ENCODE measurements at regions of chr17 and their contacts with region 1.

Region 1: DNA sequence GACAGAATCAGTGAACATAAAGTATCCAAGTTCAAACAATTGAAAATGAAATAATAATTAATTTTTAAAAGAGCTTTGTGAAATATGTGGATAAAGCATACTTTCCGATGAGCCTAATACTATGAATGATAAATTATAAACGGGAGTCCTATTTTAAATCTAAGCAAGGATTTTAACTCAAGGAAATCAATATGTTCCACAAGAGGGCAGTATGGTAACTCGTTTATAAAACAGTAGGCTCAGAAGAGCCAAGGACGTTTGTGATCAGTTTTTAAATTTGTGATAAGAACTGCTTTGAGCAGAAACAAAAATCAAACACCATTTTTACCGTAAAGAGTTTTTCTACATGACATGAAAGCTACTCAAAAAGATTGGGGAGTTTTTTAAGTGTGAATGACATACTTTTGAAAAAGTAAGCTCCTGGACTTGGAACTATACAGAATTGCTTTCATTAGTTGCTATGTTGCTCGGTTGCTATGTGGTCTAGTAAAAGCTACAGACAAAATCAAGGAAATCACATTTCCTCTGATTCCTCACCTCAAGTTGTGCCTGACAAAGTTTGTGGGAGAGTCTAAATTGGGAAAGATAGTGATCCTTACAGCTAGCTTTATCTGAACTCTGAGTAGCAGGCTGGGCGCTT is 11.8 kb upstream of the TEKT1 start:
- DNase-seq: peak; percentile 65
- H3K4me3 Mint-ChIP-seq: no peak overlapping the region
- H3K27ac Mint-ChIP-seq: no peak overlapping the region
- H3K4me1 Mint-ChIP-seq: no peaks in the 10 kb centered on the region
- H3K27me3 Mint-ChIP-seq: peaks cover 16% of the 10 kb centered on the region
- CTCF ChIP-seq: peak; percentile 45

Region 2: GRCh38 chr17:6831661-6832263 is 11.6 kb before region 1 on chr17 and contains the start of gene TEKT1:
- CTCF ChIA-PET with region 1: interaction called, 25 read pairs
- POLR2A ChIA-PET with region 1: no interaction called
- intact Hi-C with region 1: no loop called
- DNase-seq: peak; percentile 59
- H3K4me3 Mint-ChIP-seq: peak within 1 kb of the TSS; percentile 80
- H3K27ac Mint-ChIP-seq: peak within 1 kb of the TSS; percentile 86
- H3K4me1 Mint-ChIP-seq: peaks cover 5% of the 10 kb centered on the region
- H3K27me3 Mint-ChIP-seq: peaks cover 31% of the 10 kb centered on the region
- CTCF ChIP-seq: no peak
- total RNA-seq, gene TEKT1: 0.27 TPM in 1 of 2 replicates, not detected in the other

Region 3: GRCh38 chr17:6872137-6872808 is 28.9 kb after region 1 on chr17:
- CTCF ChIA-PET with region 1: interaction called, 11 read pairs
- POLR2A ChIA-PET with region 1: no interaction called
- intact Hi-C with region 1: no loop called
- DNase-seq: peak; percentile 99
- H3K4me3 Mint-ChIP-seq: peak overlapping the region; percentile 54
- H3K27ac Mint-ChIP-seq: peak overlapping the region; percentile 63
- H3K4me1 Mint-ChIP-seq: peaks cover 29% of the 10 kb centered on the region
- H3K27me3 Mint-ChIP-seq: no peaks in the 10 kb centered on the region
- CTCF ChIP-seq: no peak

Region 4: DNA sequence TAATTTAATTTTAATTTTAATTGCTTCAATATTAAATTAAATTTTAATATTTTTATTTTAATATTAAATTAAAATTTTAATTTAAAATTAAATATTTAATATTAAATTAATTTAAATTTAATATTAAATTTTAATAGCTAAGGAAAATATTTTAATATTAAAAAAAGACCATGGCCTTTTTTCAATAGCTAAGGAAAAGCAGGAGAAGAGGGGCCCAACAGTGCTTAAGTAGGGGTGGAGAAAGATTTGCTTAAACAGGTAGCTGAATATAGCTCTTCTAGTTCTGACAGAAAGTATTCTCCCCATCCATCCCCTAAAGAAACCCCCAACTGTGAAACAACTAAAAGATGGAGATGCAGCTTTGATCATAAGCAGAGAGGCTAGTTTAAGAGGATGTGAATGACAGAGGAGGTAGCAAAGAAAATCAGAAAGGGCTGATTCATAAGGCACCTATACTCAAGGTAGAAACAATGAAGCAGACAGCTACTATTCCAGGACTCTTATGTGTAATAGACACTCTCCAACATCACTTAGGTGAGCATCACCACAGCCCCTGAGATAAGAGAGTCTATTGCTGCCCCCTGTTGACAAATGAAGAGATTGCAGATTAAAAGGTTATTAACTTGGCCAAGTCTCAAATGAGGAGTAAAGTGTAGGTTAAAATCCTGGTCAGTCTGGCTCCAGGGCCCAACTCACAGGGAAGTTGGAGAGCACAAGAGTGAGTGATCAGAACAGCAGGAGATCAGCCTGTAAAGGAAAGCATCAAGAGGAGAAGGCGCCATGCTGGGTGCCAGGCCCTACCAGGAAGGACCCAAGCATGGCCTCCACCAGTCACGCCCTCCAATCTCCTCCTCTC is 161.3 kb after region 1 on chr17:
- CTCF ChIA-PET with region 1: interaction called, 137 read pairs
- POLR2A ChIA-PET with region 1: interaction called, 28 read pairs
- intact Hi-C with region 1: loop called (anchors 1 kb)
- DNase-seq: peak; percentile 82
- H3K4me3 Mint-ChIP-seq: no peak overlapping the region
- H3K27ac Mint-ChIP-seq: no peak overlapping the region
- H3K4me1 Mint-ChIP-seq: peaks cover 11% of the 10 kb centered on the region
- H3K27me3 Mint-ChIP-seq: no peaks in the 10 kb centered on the region
- CTCF ChIP-seq: peak; percentile 74